Heart right ventricle (tissue), 16 donors: ENCODE measurements at regions of chr4 and their contacts with region 1.

Region 1: GRCh38 chr4:48588230-48589097 is 98.4 kb downstream of the ZAR1 start:
- DNase-seq: no peak
- ATAC-seq: peak in 1 of 8 donors; percentile 10
- H3K4me3 ChIP-seq: no peak overlapping the region
- H3K27ac ChIP-seq: peak overlapping the region in 2 of 10 donors; percentile 16 to 50
- H3K4me1 ChIP-seq: peaks cover 0 to 42% (median 17%) of the 10 kb centered on the region in 9 donors
- H3K27me3 ChIP-seq: no peaks in the 10 kb centered on the region
- CTCF ChIP-seq: no peak

Region 2: GRCh38 chr4:48635310-48635709 is 46.8 kb after region 1 on chr4:
- intact Hi-C with region 1: loop called in 1 of 10 experiments (anchors 5 kb)
- DNase-seq: no peak
- ATAC-seq: peak in 3 of 8 donors; percentile 27 to 50 (median 28)
- H3K4me3 ChIP-seq: no peak overlapping the region
- H3K27ac ChIP-seq: peak overlapping the region in 2 of 10 donors; percentile 9 to 39
- H3K4me1 ChIP-seq: peaks cover 0 to 43% (median 27%) of the 10 kb centered on the region in 9 donors
- H3K27me3 ChIP-seq: no peaks in the 10 kb centered on the region
- CTCF ChIP-seq: no peak

Region 3: DNA sequence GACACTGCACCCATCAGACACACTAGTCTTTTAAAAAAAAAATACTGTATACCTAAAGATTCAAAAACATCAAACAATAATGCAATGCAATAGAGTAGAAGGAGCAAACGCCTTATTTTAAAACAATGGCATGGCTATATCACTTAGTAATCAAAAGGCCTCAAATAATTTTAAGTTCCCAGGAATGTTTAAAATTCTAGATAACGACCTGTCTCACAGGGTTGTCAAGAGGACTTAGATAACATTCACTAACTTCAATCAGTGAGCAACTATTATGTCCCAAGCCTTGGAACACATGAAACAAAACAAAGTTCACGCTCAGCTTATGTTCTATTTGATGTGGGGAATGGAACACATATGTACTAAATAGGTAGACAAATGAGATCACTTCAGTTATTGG is 85.1 kb after region 1 on chr4:
- intact Hi-C with region 1: loop called in 4 of 10 experiments (anchors 5 to 10 kb)
- DNase-seq: no peak
- ATAC-seq: no peak
- H3K4me3 ChIP-seq: no peak overlapping the region
- H3K27ac ChIP-seq: no peak overlapping the region
- H3K4me1 ChIP-seq: peaks cover 0 to 26% (median 9%) of the 10 kb centered on the region in 9 donors
- H3K27me3 ChIP-seq: no peaks in the 10 kb centered on the region
- CTCF ChIP-seq: no peak